ENCODE measurements at regions of chr10 and their contacts with region 1.

Region 1: DNA sequence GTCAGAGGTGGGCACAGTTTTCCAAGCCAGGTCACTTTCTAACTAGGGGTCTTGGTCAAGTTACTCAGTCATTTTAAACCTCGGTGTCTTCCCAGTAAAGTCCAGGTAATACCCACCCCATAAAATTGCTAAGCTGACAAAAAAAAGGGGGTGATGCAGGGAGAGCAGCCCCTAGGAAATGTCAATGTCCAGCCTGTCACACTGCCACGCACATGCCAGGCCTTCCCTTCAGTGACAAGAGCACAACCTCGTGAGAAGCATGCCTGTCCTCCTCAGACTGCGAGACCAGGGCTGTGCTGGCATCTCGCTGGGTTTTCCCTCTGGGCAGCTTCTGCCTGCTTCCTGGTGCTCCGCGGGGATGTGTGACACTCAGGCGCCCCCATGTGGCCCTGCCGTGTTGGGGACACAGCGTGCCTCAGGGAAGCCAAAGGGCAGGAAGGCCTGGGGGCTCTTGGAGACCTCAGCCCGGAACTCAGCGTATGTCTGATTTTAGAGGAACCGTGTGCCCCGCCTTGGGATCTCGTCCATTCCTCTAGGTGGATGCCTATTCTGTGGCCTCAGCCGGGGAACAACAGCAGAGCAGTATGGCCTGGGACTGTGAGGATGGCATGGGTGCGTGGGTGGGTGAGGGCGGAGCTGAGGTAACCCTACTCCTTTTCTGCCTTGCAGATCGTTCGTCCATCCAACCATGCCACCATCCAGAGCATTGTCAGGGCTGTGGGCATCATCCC is 10.2 kb upstream of the GDF2 start:
- DNase-seq: peak; percentile 87 to 92
- H3K4me3 ChIP-seq: no peak overlapping the region
- H3K27ac ChIP-seq: no peak overlapping the region
- H3K4me1 ChIP-seq: peaks cover 7 to 15% (median 14%) of the 10 kb centered on the region in 4 donors
- H3K27me3 ChIP-seq: peaks cover 0 to 17% (median 0%) of the 10 kb centered on the region in 3 donors
- CTCF ChIP-seq: peak in 5 of 7 experiments; percentile 65 to 79 (median 74)
- EP300 ChIP-seq: no peak
- POLR2A ChIP-seq: no peak

Region 2: DNA sequence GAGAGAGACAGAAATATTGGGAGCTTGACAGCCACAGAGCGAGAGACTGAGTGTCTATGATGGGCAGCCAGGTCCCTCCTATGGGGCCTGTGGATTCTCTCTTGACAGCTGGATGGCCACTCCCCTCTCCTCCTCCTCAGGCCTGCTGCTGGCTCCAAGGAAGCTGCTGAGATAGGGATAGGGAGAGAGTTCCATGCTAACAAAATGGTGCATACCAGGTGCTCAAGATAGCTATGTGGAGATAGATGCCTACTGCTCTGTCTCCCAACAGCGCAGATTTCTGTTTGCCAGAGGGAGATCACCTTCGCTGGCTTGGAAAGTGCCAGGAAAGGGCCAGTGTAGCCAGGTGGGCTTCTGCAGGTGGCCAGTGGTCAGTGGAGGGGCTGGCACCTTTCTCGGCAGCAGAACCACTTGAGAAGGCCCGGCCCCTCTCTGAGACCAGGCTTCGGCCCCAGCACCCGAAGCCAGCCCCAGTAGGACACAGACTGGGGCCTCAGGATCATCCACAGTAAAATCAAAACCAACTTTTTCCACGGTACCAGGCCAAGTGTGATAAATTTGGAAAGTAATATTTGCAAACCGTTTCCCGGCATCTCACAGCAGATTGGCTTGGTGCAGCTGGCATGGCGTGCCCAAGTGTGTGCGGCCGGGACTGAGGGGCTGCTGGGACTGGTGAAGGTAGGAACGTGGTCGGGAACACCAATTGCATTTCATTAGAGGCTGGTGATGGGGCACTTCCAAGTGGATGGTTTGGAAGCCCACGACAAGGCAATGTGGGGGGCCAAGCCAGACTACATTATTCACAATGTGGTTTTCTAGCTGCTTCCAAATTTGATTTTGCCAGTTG is 261.3 kb before region 1 on chr10:
- intact Hi-C with region 1: loop called (anchors 5 kb)
- DNase-seq: peak; percentile 21 to 40
- H3K4me3 ChIP-seq: no peak overlapping the region
- H3K27ac ChIP-seq: no peak overlapping the region
- H3K4me1 ChIP-seq: peaks cover 0 to 7% (median 0%) of the 10 kb centered on the region in 4 donors
- H3K27me3 ChIP-seq: peaks cover 0 to 3% (median 0%) of the 10 kb centered on the region in 3 donors
- CTCF ChIP-seq: no peak
- EP300 ChIP-seq: no peak
- POLR2A ChIP-seq: no peak

Region 3: GRCh38 chr10:47261121-47261520 is 51.0 kb before region 1 on chr10:
- intact Hi-C with region 1: no loop called
- DNase-seq: peak in 1 of 2 donors; percentile 37
- H3K4me3 ChIP-seq: no peak overlapping the region
- H3K27ac ChIP-seq: no peak overlapping the region
- H3K4me1 ChIP-seq: no peaks in the 10 kb centered on the region
- H3K27me3 ChIP-seq: peaks cover 0 to 15% (median 0%) of the 10 kb centered on the region in 3 donors
- CTCF ChIP-seq: no peak
- EP300 ChIP-seq: no peak
- POLR2A ChIP-seq: no peak

Region 4: GRCh38 chr10:47402641-47403301 is 90.7 kb after region 1 on chr10:
- intact Hi-C with region 1: no loop called
- DNase-seq: peak in 1 of 2 donors; percentile 88
- H3K4me3 ChIP-seq: no peak overlapping the region
- H3K27ac ChIP-seq: peak overlapping the region in 1 of 5 donors; percentile 41
- H3K4me1 ChIP-seq: peaks cover 0 to 23% (median 17%) of the 10 kb centered on the region in 4 donors
- H3K27me3 ChIP-seq: no peaks in the 10 kb centered on the region
- CTCF ChIP-seq: no peak
- EP300 ChIP-seq: no peak
- POLR2A ChIP-seq: no peak